Right lobe of liver (tissue), 6 donors: ENCODE measurements at regions of chr1 and their contacts with region 1.

Region 1: DNA sequence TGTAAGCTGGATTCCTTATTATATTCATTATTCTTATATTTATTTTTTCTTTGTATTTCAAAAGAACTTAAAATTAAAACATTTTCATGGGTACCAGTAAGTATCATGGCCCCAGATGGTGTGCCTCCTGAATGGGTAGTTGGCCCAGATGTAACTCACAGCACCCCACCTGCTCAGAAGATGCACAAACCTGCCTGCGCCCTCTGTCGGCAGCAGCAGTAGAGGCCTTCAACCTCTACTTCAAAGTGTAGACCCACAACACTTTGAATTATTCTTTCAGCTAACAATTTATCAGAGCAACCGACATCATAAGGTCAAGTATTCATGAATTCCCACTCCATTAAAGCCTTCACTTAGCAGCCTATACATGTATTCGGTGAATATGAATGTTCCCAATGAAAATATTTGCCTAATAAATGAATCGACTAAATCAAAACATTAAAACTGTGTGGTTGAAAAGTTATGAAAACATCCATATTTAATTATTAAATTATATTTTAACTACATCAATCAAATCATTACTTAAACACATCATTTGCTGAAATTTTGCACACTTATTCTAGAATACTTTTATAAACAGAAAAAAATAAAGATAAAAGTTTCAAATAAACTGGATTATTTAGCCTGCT is 25.4 kb downstream of the PIGM start:
- DNase-seq: peak; percentile 77 to 79 (median 78)
- ATAC-seq: peak; percentile 88 to 95 (median 92)
- H3K4me3 ChIP-seq: no peak overlapping the region
- H3K27ac ChIP-seq: no peak overlapping the region
- H3K4me1 ChIP-seq: peaks cover 0 to 4% (median 0%) of the 10 kb centered on the region in 4 donors
- H3K27me3 ChIP-seq: no peaks in the 10 kb centered on the region
- CTCF ChIP-seq: peak; percentile 79 to 95 (median 91)
- POLR2A ChIP-seq: no peak

Region 2: DNA sequence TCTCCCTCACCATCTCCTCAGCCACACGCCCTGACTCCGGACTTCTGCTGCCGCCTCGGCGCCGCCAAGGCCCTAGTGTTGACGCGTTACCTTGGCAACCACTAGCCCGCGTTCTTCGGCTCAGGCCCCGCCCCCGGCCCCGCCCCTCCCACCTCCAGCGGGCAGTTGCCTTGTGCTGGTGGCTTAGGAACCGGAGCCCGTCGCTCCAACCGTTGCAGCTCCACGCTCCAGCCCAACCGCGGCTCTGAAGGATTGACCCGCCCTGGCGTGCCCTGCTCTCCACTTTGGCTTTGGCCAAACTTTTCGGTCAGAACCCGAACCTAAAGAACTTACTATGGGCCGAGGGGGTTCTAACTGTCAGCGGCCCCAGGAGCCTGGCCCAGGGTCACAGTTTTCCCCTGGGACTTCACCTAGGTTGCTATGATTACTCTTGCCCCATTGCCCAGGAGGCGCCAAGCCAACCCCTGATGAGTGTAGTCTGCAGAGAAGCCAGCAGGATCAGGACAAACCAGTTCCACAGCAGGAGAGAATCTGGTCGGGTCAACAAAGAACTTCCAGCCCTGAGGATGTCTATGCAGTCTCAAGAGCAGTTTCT is 106.2 kb before region 1 on chr1 and contains the start of gene CFAP45:
- intact Hi-C with region 1: no loop called
- DNase-seq: peak; percentile 74 to 87 (median 83)
- ATAC-seq: peak; percentile 85 to 94 (median 90)
- H3K4me3 ChIP-seq: no peak within 1 kb of the TSS
- H3K27ac ChIP-seq: no peak within 1 kb of the TSS
- H3K4me1 ChIP-seq: peaks cover 0 to 4% (median 0%) of the 10 kb centered on the region in 4 donors
- H3K27me3 ChIP-seq: no peaks in the 10 kb centered on the region
- CTCF ChIP-seq: no peak
- POLR2A ChIP-seq: no peak
- total RNA-seq, gene CFAP45: not detected

Region 3: GRCh38 chr1:159932296-159933285 is 73.8 kb before region 1 on chr1:
- intact Hi-C with region 1: loop called in 1 of 2 experiments (anchors 5 kb)
- DNase-seq: no peak
- ATAC-seq: no peak
- H3K4me3 ChIP-seq: no peak overlapping the region
- H3K27ac ChIP-seq: no peak overlapping the region
- H3K4me1 ChIP-seq: peaks cover 0 to 15% (median 9%) of the 10 kb centered on the region in 4 donors
- H3K27me3 ChIP-seq: no peaks in the 10 kb centered on the region
- CTCF ChIP-seq: no peak
- POLR2A ChIP-seq: no peak

Region 4: GRCh38 chr1:159943908-159944622 is 62.4 kb before region 1 on chr1:
- intact Hi-C with region 1: loop called in 1 of 2 experiments (anchors 5 kb)
- DNase-seq: no peak
- ATAC-seq: peak in 3 of 4 donors; percentile 2 to 4 (median 2)
- H3K4me3 ChIP-seq: peak overlapping the region in 2 of 3 donors; percentile 52 to 74
- H3K27ac ChIP-seq: peak overlapping the region in 1 of 3 donors; percentile 47
- H3K4me1 ChIP-seq: peaks cover 0 to 20% (median 5%) of the 10 kb centered on the region in 4 donors
- H3K27me3 ChIP-seq: no peaks in the 10 kb centered on the region
- CTCF ChIP-seq: no peak
- POLR2A ChIP-seq: no peak

Region 5: GRCh38 chr1:160098852-160099561 is 92.6 kb after region 1 on chr1:
- intact Hi-C with region 1: no loop called
- DNase-seq: peak; percentile 99
- ATAC-seq: peak; percentile 75 to 88 (median 80)
- H3K4me3 ChIP-seq: peak overlapping the region; percentile 24 to 52 (median 44)
- H3K27ac ChIP-seq: peak overlapping the region; percentile 65 to 88 (median 78)
- H3K4me1 ChIP-seq: peaks cover 0 to 57% (median 20%) of the 10 kb centered on the region in 4 donors
- H3K27me3 ChIP-seq: no peaks in the 10 kb centered on the region
- CTCF ChIP-seq: no peak
- POLR2A ChIP-seq: peak; percentile 57